ENCODE measurements at regions of chr17 and their contacts with region 1.

Region 1: DNA sequence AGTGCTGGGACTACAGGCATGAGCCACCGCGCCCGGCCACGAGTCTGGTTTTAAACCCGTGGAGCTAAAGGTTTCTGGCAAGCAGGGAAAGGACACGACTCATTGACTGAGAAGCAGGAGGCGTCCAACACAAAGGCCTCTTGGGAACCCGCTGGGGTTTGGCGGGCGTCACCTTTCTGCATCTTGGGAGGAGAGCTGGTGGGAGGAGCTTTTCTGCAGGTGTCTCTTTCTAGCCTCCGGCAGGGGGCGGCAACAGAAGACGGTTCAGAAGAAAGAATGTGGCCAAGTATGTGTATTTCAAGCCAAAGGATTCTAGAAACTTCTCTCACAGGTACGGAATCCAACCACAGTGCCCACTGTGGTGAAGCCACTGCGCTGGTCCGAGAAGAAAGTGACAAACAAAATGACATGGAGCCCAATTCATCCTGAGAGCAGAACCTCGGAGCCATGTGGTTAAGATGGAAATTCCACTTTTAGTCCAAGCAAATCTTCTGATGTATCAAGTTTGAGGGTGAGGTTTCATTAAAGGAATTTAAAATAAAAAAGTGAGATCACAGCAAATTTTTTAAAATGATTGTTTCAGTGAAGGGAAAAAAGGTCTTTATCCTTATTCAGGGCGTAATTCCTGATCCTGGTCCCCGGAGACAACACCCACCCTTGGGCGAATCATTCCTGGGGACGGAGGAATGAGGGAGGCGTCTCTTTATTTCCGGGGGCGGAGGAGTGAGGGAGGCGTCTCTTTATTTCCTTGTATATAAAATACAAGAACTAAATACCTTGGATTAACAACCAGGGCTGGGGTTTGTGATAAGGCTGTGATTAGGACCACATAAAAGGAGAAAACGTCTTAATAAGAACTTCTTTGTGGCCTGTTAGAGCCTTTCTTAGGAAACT is 97.6 kb downstream of the MRM3 start:
- DNase-seq: peak; percentile 65 to 89
- H3K4me3 ChIP-seq: no peak overlapping the region
- H3K27ac ChIP-seq: no peak overlapping the region
- H3K4me1 ChIP-seq: peaks cover 11% of the 10 kb centered on the region; the same call in 1 of the 2 replicates
- H3K27me3 ChIP-seq: no peaks in the 10 kb centered on the region
- CTCF ChIP-seq: peak; percentile 44

Region 2: DNA sequence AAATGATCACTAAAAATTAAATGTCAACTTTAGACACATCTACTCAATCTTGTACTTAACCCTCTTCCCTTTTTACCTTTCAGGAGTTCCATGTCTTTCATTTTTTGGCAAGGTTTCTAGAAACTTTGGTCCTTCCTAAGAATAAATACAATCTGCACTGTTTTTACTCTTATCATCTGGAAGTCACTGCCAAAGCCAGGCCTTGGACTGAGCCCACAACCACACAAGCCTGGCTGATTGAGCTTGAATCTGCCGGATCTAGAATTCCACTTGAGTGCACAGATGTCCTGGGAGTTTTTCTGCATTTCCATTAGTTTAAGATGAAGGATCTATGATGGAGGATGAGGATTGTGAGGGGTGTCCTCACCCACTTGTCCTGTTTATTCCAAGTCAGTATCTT is 291.3 kb before region 1 on chr17:
- CTCF ChIA-PET with region 1: no interaction called
- POLR2A ChIA-PET with region 1: no interaction called
- intact Hi-C with region 1: no loop called
- DNase-seq: no peak
- H3K4me3 ChIP-seq: no peak overlapping the region
- H3K27ac ChIP-seq: no peak overlapping the region
- H3K4me1 ChIP-seq: no peaks in the 10 kb centered on the region
- H3K27me3 ChIP-seq: no peaks in the 10 kb centered on the region
- CTCF ChIP-seq: no peak

Region 3: DNA sequence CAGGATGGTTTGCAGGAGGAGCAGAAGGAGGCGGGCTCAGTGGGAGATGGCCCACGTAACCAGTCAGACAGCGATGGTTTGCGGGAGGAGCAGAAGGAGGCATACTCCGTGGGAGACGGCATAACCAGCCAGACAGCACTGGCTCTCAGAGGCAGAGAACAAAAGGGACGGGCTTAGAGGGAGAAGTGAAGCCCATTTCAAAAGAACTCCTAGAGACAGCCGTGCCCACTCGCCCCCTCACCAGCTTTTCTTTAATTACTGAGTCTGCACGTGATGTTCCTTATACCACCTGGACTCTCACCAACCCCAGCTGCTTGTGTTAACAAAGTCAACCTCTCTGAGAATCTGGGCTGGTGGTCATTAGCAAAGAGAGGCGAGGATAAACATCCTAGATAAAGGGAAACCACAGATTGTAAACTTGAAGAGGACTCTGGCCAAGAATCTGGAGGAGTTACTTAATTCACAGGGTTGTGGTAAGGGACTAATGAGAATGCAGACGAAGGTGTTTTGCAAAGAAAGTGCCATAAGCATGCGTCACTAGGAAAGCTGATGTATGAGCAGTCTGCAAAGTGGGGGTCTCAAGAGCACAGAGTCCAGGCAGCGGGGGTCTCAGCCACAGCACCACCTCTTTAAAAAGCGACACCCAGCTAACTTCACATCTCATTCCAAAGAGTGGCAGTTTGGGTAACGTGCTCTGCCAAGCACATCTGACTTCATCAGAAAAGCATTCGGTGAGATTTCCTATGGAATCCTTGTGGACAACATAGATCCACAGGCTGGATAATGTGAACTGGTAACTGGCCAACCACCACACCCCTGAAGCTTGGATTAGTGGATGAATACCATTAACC is 48.0 kb after region 1 on chr17:
- CTCF ChIA-PET with region 1: no interaction called
- POLR2A ChIA-PET with region 1: no interaction called
- intact Hi-C with region 1: loop called (anchors 1 kb)
- DNase-seq: peak; percentile 83 to 97
- H3K4me3 ChIP-seq: peak overlapping the region; percentile 29; the same call in 1 of the 2 replicates
- H3K27ac ChIP-seq: peak overlapping the region; percentile 84
- H3K4me1 ChIP-seq: peaks cover 60% of the 10 kb centered on the region
- H3K27me3 ChIP-seq: no peaks in the 10 kb centered on the region
- CTCF ChIP-seq: no peak

Region 4: DNA sequence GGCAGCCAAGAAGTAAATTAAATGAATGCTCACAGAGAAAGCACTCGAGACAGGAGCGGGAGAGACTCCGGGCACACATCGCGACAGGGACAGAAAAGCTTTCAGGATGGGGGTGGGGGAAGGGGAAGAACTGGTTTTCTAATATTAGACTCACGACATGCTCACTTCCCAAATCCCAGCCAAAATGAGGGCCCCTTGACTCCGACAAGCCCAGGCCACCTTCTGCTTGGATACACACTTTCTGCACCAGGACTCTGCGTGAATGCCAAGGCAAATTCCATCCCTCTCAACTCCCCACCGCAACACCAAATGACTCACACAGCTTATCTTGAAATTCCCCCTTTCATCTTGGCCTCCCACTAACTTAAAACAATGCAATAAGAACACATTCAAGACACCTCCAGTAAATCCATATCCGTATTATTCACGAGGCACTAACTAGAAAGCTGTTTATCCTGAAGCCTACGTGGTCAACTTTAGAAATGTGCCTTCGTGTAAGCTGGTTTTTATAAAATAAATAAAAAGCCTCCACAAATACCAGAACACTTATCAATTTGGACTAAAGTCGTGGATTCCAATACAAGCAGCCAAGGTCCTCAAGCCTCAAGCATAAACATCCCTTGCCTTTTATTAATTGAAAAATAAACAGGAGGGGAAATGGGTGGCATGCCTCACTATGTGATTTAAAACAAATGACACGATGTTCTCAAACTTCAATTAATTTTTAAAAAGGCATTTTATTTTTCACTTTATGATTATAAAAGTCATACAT is 53.7 kb after region 1 on chr17:
- CTCF ChIA-PET with region 1: no interaction called
- POLR2A ChIA-PET with region 1: no interaction called
- intact Hi-C with region 1: loop called (anchors 1 kb)
- DNase-seq: peak; percentile 91 to 99
- H3K4me3 ChIP-seq: peak overlapping the region; percentile 38; the same call in 1 of the 2 replicates
- H3K27ac ChIP-seq: peak overlapping the region; percentile 91
- H3K4me1 ChIP-seq: peaks cover 49% of the 10 kb centered on the region
- H3K27me3 ChIP-seq: no peaks in the 10 kb centered on the region
- CTCF ChIP-seq: no peak

Region 5: GRCh38 chr17:1231456-1231855 is 351.7 kb after region 1 on chr17:
- CTCF ChIA-PET with region 1: no interaction called
- POLR2A ChIA-PET with region 1: no interaction called
- intact Hi-C with region 1: no loop called
- DNase-seq: no peak
- H3K4me3 ChIP-seq: no peak overlapping the region
- H3K27ac ChIP-seq: no peak overlapping the region
- H3K4me1 ChIP-seq: no peaks in the 10 kb centered on the region
- H3K27me3 ChIP-seq: peaks cover 35% of the 10 kb centered on the region
- CTCF ChIP-seq: no peak